ENCODE measurements at regions of chr11 and their contacts with region 1.

Region 1: GRCh38 chr11:64369440-64370211 is 10.7 kb downstream of the RPS6KA4 start:
- DNase-seq: no peak

Region 2: GRCh38 chr11:63599211-63600122 is 770.2 kb before region 1 on chr11:
- intact Hi-C with region 1: loop called in 1 of 2 experiments (anchors 5 kb)
- DNase-seq: peak; percentile 32

Region 3: GRCh38 chr11:64436000-64436399 is 66.4 kb after region 1 on chr11:
- intact Hi-C with region 1: no loop called
- DNase-seq: peak; percentile 45

Region 4: DNA sequence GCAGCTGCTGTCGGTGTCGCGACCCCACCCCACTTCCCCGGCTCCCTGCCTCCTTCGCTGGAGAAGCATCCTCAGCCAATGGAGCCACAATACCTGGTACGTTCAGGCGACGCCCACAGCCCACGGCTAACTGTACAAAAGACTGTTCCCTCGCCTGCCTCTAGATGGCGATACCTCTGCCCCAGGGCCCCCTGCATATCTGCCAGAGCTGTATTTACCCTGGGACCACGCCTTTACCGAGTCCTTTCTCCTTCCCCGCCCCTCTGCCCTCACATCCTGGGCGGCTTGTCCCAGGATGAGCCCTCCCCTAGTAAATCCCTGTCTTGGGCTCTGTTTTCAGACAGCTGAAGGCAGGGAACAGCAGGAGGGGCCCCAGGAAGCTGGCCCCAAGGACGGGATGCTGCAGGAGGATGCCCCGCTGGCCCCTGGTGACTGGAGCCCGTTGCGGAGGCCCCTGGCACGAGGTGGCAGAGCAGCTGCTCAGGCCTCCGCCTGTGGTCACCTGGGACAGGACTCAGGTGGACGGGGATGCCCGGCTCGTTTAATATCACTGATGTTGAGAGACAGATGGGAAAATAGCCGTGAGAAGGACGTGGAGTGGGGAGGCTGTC is 80.0 kb after region 1 on chr11:
- intact Hi-C with region 1: loop called in 1 of 2 experiments (anchors 2 kb)
- DNase-seq: peak; percentile 83